ENCODE measurements at regions of chr10 and their contacts with region 1.

Region 1: DNA sequence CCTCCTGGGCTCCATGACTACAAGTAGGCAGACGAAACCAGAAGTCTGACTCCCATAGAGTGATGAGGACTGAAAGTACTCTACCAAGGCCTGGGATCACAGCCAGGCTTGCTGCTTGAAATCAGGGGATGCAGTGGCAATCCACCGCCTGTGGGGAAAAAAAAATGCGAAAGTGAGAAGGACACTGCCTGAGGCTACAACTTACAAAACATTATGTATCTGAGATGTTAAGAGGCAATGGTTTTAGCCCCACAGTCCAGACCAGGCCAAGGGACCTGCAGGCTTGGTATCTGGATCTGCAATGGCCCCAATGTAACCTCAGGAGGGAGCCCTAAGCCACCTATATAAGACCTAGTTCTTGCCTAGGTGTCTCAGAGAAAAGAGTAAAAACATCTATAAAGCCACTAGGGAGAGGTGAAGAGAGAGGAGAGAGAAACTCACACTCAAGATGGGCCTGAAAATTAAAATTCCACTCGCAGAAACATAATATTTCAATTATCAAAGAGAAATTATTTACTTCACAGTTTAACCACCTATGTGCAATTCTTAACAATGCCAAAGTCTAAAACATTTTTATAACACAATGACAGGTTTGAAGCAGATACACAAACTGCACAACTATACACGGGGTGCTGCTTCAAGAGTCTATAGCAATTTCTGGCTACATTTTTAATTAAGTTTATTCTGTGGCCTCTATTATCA is 13.9 kb downstream of the DNAJC1 start:
- DNase-seq: peak; percentile 53
- ATAC-seq: peak; percentile 86 to 90
- H3K4me3 ChIP-seq: no peak overlapping the region
- H3K27ac ChIP-seq: no peak overlapping the region
- H3K4me1 ChIP-seq: no peaks in the 10 kb centered on the region
- H3K27me3 ChIP-seq: no peaks in the 10 kb centered on the region
- CTCF ChIP-seq: peak; percentile 56

Region 2: GRCh38 chr10:22159180-22159579 is 169.6 kb after region 1 on chr10:
- intact Hi-C with region 1: no loop called
- DNase-seq: no peak
- ATAC-seq: no peak
- H3K4me3 ChIP-seq: no peak overlapping the region
- H3K27ac ChIP-seq: no peak overlapping the region
- H3K4me1 ChIP-seq: no peaks in the 10 kb centered on the region
- H3K27me3 ChIP-seq: no peaks in the 10 kb centered on the region
- CTCF ChIP-seq: no peak

Region 3: DNA sequence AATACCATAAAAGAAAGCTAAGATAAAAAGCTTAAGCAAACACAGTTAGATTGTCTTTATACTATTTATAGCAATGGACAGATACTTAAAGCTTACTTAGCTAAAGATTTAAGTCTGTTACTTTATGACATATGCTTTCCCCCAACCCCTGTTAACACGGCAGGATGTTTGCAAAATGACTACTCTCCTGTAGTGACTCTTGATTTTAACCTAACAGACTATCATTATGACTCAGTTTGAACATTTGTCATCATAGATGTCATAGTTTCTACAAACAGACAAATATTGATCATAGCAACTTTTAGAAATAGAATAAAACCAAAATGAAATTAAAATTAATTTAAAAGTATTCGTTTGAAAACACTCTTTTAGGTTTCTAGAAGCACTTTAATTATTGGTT is 318.8 kb after region 1 on chr10:
- intact Hi-C with region 1: loop called (anchors 10 kb)
- DNase-seq: no peak
- ATAC-seq: no peak
- H3K4me3 ChIP-seq: no peak overlapping the region
- H3K27ac ChIP-seq: no peak overlapping the region
- H3K4me1 ChIP-seq: no peaks in the 10 kb centered on the region
- H3K27me3 ChIP-seq: peaks cover 5% of the 10 kb centered on the region
- CTCF ChIP-seq: no peak

Measured in lower lobe of right lung (tissue), 2 donors.